Activated CD4-positive, alpha-beta T cell treated with anti-CD3 and anti-CD28 coated beads for 36 hours (primary cell): ENCODE measurements at regions of chr7 and their contacts with region 1.

Region 1: DNA sequence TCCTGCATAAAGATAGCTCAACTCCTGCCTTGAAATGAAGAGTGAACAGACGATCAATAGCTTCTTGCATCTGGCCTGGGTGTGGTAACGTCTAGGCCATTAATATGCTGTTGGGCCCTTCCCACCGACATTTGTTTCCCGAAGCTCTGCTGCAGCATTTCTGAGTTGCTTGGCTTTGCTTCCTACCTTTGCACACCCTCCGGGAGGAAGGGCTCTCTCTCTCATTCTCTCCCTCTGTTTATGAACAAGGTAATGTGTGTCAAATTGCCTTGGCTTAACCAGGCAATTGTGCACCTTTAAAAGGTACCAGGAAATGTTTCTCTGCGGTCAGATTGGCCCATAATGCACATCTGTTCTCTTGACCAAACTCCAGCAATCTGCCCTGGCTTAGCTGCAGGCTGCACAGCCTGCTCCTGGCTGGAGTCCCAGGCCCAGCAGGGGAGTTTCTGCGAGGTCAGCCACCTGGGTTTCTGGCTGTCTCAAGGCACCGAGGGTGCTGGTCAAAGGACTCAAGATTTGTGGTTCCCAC is 223.7 kb downstream of the SNX10 start:
- DNase-seq: no peak
- ATAC-seq: no peak
- H3K4me3 Mint-ChIP-seq: no peak overlapping the region
- H3K27ac Mint-ChIP-seq: no peak overlapping the region
- H3K4me1 Mint-ChIP-seq: no peaks in the 10 kb centered on the region
- H3K27me3 Mint-ChIP-seq: peaks cover 8% of the 10 kb centered on the region

Region 2: GRCh38 chr7:26574476-26574875 is 59.1 kb after region 1 on chr7:
- CTCF ChIA-PET with region 1: interaction called, 4 read pairs
- POLR2A ChIA-PET with region 1: no interaction called
- intact Hi-C with region 1: loop called in 1 of 2 experiments (anchors 10 kb)
- DNase-seq: no peak
- ATAC-seq: no peak
- H3K4me3 Mint-ChIP-seq: no peak overlapping the region
- H3K27ac Mint-ChIP-seq: no peak overlapping the region
- H3K4me1 Mint-ChIP-seq: no peaks in the 10 kb centered on the region
- H3K27me3 Mint-ChIP-seq: peaks cover 4% of the 10 kb centered on the region